ENCODE measurements at regions of chr9 and their contacts with region 1.

Region 1: DNA sequence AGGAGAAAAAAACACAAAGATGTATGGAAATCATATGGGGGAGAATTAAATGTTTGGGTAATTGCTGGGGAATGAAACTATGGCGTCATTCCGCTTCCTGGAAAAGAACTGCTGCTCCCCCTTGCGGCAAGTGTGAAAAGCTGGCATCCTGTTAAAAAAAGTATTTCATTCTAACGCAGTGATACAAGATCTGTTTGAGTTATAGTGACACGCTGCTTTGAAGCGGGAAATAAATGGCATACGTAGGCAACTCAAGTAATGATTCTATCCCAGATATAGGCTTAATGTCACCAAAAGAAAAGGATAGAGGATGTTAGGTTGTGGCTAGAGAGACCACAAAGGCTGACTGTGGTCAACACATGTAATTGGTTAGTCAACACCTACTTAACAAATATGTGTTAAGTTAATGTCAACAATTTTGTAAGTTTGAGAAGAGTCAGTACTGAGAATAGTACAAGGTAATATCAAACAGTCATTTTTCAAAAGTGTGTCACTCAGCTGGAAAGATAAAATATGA is 70.2 kb upstream of the ALDH1A1 start:
- DNase-seq: peak in 4 of 10 donors; percentile 11 to 48 (median 36)

Region 2: GRCh38 chr9:72038890-72039410 is 984.1 kb before region 1 on chr9:
- intact Hi-C with region 1: loop called (anchors 10 kb)
- DNase-seq: peak; percentile 60 to 95 (median 85)

Region 3: DNA sequence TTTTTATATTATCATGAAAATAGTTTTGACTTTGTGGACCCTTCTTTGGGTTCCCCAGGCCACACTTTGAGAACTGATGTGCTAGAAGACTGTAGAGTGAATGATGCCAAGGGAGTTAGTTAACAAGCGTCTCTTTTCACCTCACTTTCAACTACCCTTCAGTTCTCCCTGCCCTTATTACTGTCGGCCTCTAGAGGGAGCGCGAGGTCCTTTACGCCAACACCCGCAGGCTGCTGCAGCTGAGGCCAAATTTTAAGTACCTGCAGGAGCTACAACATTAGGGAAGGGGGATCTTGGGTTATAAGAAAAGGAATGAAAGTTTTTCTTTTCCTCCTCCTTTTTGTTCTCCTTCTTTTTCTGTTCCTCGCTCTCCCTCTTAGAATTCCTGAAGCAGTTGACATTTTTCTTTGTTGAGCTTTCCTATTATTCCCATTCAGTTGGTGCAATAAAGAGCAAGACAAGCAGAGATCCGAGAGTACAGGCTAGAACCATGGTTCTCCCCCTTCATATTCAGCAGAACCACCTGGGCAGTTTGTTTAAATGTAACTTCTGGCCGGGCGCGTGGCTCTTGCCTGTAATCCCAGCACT is 742.1 kb before region 1 on chr9:
- intact Hi-C with region 1: loop called (anchors 10 kb)
- DNase-seq: peak; percentile 37 to 95 (median 74)

Region 4: GRCh38 chr9:72383978-72384709 is 638.9 kb before region 1 on chr9:
- intact Hi-C with region 1: no loop called
- DNase-seq: no peak

Region 5: GRCh38 chr9:72839085-72839484 is 184.0 kb before region 1 on chr9:
- intact Hi-C with region 1: no loop called
- DNase-seq: no peak

Region 6: GRCh38 chr9:72856972-72857623 is 166.0 kb before region 1 on chr9:
- intact Hi-C with region 1: loop called (anchors 5 kb)
- DNase-seq: peak in 1 of 10 donors; percentile 20

Region 7: DNA sequence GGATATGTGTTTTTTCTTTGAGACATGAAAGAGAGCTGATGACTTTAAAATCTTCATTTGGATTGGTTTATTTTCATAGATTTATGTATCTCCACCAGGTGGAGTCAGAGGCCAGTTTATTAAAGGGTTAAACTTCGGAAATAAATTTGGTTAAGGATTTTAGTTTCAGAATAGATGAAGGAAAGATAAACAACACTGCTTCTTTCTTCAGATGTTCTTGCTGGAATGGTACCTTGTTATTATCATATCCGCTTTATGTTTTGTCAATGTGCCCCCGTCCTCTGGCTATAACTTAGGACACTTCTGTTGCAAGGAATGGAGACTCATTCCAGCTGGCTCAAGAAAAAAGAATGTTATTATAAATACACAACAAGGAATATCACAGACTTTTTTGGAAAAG is 151.4 kb before region 1 on chr9:
- intact Hi-C with region 1: loop called (anchors 5 kb)
- DNase-seq: no peak

Region 8: DNA sequence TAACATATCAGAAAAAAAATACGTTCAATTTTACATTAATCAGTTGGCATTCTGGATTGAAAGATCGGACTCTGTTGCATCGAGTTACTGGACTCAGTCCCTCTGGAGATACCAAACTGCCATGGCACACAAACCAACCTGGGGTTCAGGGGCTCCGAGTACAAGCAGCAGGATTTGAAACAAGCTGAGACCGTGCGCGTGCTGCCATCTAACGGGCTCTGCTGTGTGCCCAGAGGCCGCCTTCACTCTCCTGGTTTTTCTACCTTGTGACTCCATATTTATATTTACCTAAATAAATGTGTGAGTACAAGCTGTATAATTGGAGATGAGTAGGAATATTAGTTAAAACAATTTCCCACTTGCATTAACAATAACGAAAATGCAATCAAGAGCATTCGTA is 176.8 kb after region 1 on chr9:
- intact Hi-C with region 1: no loop called
- DNase-seq: peak in 5 of 10 donors; percentile 10 to 72 (median 54)

Measured in posterior cingulate gyrus (tissue), 11 donors.